Activated T-helper 1 cell treated with anti-CD3 and anti-CD28 coated beads, Interleukin-12 subunit alpha, Interleukin-12 subunit beta, Interleukin-2, Interleukin-4 antibody, amounts not matched to agents 30 ng/mL and 10 ng/mL and 1 ng/mL, durations not matched to agents 14 hours and 24 hours and 36 hours (primary cell): ENCODE measurements at regions of chr5 and their contacts with region 1.

Region 1: GRCh38 chr5:54867310-54867944 is 118.0 kb downstream of the ESM1 start:
- DNase-seq: no peak
- H3K4me3 Mint-ChIP-seq: no peak overlapping the region
- H3K27ac Mint-ChIP-seq: no peak overlapping the region
- H3K4me1 Mint-ChIP-seq: peaks cover 30% of the 10 kb centered on the region
- H3K27me3 Mint-ChIP-seq: peaks cover 67% of the 10 kb centered on the region

Region 2: DNA sequence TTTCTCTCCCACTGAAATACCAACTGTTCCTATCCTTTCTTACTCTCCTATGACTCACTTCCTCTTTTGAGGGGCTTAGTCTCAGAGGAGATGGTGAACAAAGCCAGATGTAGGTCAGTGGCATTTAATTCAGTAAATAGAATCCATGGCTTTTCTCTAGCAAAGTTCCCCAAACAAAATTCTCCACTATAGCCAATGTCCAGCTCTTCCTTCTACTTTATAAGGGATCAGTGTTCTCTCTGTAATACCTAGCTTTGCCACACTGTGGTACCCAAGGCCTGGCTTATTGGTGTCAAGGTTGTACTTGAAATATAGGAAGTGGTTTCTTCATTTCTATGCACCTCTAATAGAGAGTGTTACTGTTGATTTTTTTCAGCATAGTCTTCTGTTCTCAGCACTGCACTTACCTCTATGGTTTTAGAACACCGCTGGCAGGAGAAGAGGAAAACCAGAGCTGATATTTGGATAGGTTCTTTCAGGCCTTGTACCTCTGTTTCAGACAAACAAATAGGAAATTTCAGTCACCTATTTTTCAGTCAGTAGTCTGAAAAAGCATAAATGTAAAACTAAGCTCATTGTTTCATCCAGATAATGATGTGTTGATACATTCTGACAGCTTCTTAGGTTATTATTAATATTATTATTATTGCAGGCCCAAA is 1918.9 kb before region 1 on chr5:
- intact Hi-C with region 1: no loop called
- DNase-seq: peak; percentile 51
- H3K4me3 Mint-ChIP-seq: no peak overlapping the region
- H3K27ac Mint-ChIP-seq: no peak overlapping the region
- H3K4me1 Mint-ChIP-seq: peaks cover 31% of the 10 kb centered on the region
- H3K27me3 Mint-ChIP-seq: no peaks in the 10 kb centered on the region

Region 3: GRCh38 chr5:54646356-54647101 is 220.9 kb before region 1 on chr5:
- intact Hi-C with region 1: loop called (anchors 1 kb)
- DNase-seq: peak; percentile 80
- H3K4me3 Mint-ChIP-seq: peak overlapping the region; percentile 68
- H3K27ac Mint-ChIP-seq: peak overlapping the region; percentile 88
- H3K4me1 Mint-ChIP-seq: peaks cover 46% of the 10 kb centered on the region
- H3K27me3 Mint-ChIP-seq: no peaks in the 10 kb centered on the region

Region 4: DNA sequence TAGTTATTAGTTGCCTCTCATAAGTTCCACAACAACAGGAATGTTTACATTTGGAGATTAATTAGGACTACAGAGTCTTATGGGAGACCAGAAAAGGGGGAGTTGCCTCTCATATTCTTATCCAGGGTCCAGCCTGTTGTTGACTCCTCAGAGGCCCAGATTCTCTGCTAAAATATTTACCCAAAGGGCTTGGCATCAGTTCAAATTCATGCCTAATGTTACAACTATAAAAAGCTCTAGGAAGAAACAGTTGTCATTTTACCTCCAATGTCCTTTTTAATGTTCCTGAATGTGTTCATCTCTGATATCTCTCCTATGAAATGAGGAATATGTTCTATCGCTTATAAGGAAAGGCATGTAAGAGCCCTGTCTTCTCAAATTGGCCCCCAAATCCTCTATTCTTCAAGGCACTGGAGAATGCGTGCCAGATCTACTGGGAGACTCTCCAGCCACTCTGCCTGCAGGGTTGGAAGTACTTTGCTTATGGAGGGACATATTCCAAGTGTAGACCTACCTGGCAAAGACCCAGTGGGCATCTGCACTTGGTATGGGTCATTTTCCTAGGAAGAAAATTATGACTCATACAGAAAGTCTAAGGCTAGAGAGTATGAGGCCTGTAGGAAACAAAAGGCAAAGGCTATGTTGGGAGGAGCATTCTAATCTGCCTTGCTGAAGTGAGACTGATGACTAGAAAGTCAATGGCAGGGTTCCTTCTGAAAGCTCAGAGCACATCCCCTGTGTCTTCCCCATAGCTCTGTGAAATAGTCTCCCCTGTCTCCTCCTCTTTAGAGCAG is 74.6 kb before region 1 on chr5:
- intact Hi-C with region 1: loop called (anchors 1 kb)
- DNase-seq: no peak
- H3K4me3 Mint-ChIP-seq: peak overlapping the region; percentile 32
- H3K27ac Mint-ChIP-seq: peak overlapping the region; percentile 91
- H3K4me1 Mint-ChIP-seq: peaks cover 47% of the 10 kb centered on the region
- H3K27me3 Mint-ChIP-seq: peaks cover 3% of the 10 kb centered on the region

Region 5: DNA sequence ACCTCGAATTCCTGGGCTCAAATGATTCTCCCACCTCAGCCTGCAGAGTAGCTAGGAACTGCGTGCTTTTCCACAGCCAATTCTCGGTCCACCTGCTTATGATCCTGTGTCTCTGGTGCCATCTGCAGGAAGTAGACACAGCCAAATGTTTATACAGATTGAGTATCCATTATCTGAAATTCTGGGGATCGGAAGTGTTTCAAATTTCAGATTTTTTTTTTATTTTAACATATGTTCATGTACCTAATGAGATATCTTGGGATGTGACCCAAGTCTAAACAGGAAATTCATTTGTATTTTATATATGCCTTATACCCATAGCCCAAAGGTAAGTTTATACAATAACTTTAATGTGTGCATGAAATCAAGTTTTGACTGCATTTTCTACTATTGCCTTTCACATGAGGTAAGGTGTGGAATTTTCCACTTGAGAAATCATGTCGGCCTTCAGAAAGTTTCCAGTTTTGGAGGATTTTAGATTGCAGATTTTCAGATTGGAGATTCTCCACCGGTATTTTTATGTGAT is 28.5 kb after region 1 on chr5:
- intact Hi-C with region 1: loop called (anchors 1 kb)
- DNase-seq: no peak
- H3K4me3 Mint-ChIP-seq: peak overlapping the region; percentile 28
- H3K27ac Mint-ChIP-seq: no peak overlapping the region
- H3K4me1 Mint-ChIP-seq: peaks cover 5% of the 10 kb centered on the region
- H3K27me3 Mint-ChIP-seq: peaks cover 77% of the 10 kb centered on the region

Region 6: GRCh38 chr5:54927097-54927746 is 59.8 kb after region 1 on chr5:
- intact Hi-C with region 1: loop called (anchors 2 kb)
- DNase-seq: no peak
- H3K4me3 Mint-ChIP-seq: no peak overlapping the region
- H3K27ac Mint-ChIP-seq: peak overlapping the region; percentile 3
- H3K4me1 Mint-ChIP-seq: peaks cover 8% of the 10 kb centered on the region
- H3K27me3 Mint-ChIP-seq: peaks cover 14% of the 10 kb centered on the region

Region 7: DNA sequence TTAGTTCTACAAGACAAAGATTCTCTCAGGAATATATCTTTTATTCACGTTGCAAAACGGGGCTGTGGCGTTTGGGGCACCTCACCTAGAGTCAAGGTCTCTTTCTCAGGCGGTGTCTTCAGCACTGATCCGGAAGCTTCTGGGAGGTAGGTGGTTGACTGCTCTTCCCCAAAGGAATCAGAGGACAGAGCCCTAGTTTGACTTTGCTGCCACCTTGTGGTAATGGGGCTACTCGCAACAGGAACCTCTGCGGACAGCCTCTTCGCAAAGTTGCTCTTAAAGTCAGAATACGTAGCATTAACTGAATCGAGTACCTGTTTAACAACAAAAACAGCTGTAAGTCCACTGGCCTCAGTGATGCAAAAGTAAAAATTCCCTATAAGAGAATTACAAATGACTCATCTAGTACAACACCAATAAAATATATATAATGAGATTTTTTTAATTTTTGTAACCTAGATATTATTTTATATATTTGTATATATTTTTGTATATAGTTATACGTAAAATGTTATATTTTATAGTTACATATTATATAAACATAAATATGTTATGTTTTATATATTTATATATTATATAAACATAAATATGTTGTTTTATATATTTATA is 279.2 kb after region 1 on chr5:
- intact Hi-C with region 1: loop called (anchors 1 kb)
- DNase-seq: peak; percentile 82
- H3K4me3 Mint-ChIP-seq: peak overlapping the region; percentile 20
- H3K27ac Mint-ChIP-seq: no peak overlapping the region
- H3K4me1 Mint-ChIP-seq: peaks cover 31% of the 10 kb centered on the region
- H3K27me3 Mint-ChIP-seq: peaks cover 17% of the 10 kb centered on the region

Region 8: GRCh38 chr5:55636683-55637082 is 769.3 kb after region 1 on chr5:
- intact Hi-C with region 1: no loop called
- DNase-seq: no peak
- H3K4me3 Mint-ChIP-seq: no peak overlapping the region
- H3K27ac Mint-ChIP-seq: no peak overlapping the region
- H3K4me1 Mint-ChIP-seq: peaks cover 16% of the 10 kb centered on the region
- H3K27me3 Mint-ChIP-seq: no peaks in the 10 kb centered on the region